ENCODE measurements at regions of chr16 and their contacts with region 1.

Region 1: DNA sequence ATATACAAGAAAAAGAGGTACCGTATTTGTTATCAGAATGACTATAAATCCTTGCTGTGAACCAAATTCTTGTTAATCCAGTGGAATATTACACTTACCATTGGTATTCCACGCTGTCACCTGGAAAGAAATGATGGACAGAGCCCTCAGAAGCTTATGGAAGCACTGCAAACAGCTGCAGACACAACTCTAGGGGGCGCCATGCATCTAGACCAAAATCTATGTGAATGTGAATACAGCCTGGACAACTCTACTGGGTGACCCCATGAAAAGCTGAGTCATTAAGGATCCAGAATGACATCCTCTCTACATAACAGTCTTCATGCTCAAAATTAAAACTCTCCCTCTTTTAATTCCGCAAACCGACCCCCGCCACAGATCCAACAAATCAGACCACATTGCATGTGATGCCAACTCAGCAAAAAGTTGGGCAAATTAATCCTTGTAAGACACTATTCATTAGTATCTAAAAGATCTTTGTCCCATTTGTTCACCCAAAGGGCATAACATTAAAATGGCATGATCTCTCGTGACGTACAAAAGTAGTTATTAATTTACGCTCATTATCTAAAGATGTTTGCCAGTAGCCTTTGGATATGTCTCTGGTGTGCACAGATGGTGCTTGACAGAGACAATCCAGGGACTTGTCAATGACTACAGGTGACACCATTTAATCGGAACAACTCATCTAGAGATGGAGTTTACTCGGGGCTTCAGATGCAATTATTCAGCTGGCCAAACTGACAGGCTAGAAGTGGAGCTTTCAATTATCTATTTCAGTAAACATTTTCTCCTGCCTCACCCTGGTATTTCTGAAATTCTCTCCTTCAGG is 552.7 kb upstream of the PSMD7 start:
- DNase-seq: peak; percentile 25
- H3K4me3 Mint-ChIP-seq: no peak overlapping the region
- H3K27ac Mint-ChIP-seq: no peak overlapping the region
- H3K4me1 Mint-ChIP-seq: no peaks in the 10 kb centered on the region
- H3K27me3 Mint-ChIP-seq: peaks cover 7% of the 10 kb centered on the region

Region 2: DNA sequence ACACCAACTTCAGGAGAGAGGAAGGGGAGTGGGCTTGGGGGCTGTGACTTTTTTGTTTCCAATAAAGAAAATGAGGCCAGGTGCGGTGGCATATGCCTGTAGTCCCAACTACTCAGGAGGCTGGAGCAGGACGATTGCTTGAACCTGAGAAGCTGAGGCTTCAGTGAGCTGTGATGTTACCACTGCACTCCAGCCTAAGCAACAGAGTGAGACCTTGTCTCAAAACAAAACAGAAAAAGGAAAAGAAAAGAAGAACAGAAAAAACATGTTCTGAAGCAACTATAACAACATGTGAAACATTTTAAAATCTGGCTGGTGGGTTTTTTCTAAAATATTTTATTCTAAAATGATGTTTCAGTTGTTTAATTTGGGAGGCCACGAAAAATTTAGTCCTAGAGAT is 142.0 kb before region 1 on chr16:
- CTCF ChIA-PET with region 1: no interaction called
- intact Hi-C with region 1: no loop called
- DNase-seq: no peak
- H3K4me3 Mint-ChIP-seq: no peak overlapping the region
- H3K27ac Mint-ChIP-seq: no peak overlapping the region
- H3K4me1 Mint-ChIP-seq: no peaks in the 10 kb centered on the region
- H3K27me3 Mint-ChIP-seq: peaks cover 5% of the 10 kb centered on the region

Region 3: DNA sequence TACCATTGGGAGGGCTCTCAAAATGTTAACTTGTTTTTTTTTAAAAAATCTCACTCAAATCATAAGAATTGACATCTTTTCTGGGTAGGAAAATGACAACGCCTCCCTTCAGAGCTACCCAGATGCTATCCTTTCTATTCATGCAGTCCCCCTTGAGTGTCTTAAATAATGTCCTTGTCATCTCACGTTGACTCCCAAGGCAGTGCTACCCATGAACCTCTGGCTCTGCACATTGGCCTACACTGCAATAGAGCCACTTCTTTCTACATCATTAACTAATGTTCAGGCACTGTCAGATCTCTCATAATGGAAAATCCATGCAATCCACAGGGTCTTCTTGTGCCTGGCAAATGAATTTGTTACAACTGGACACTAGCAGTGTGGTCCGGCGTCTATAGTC is 126.1 kb before region 1 on chr16:
- CTCF ChIA-PET with region 1: no interaction called
- intact Hi-C with region 1: no loop called
- DNase-seq: no peak
- H3K4me3 Mint-ChIP-seq: no peak overlapping the region
- H3K27ac Mint-ChIP-seq: no peak overlapping the region
- H3K4me1 Mint-ChIP-seq: no peaks in the 10 kb centered on the region
- H3K27me3 Mint-ChIP-seq: peaks cover 4% of the 10 kb centered on the region

Region 4: DNA sequence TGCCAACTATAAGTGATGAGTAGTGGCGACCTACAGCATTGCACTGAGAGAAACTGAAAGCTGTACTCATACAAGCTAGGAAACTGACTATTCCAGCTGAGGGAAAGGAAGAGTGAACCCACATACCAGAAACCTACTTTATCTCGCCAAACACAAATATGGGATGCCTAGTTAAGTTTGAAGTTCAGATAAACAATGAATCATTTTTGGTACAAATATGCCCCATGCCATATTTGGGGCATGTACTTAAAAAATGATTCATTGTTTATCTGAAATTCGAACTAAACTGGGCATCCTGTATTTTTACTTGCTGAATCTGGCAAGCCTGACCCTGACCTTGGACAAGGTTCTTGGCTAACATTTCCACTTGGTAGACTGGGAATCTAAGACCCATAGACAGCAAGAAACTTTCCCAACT is 24.9 kb after region 1 on chr16:
- CTCF ChIA-PET with region 1: no interaction called
- intact Hi-C with region 1: no loop called
- DNase-seq: no peak
- H3K4me3 Mint-ChIP-seq: no peak overlapping the region
- H3K27ac Mint-ChIP-seq: no peak overlapping the region
- H3K4me1 Mint-ChIP-seq: no peaks in the 10 kb centered on the region
- H3K27me3 Mint-ChIP-seq: no peaks in the 10 kb centered on the region

Region 5: GRCh38 chr16:73823205-73823849 is 79.4 kb after region 1 on chr16:
- CTCF ChIA-PET with region 1: no interaction called
- intact Hi-C with region 1: no loop called
- DNase-seq: no peak
- H3K4me3 Mint-ChIP-seq: no peak overlapping the region
- H3K27ac Mint-ChIP-seq: no peak overlapping the region
- H3K4me1 Mint-ChIP-seq: no peaks in the 10 kb centered on the region
- H3K27me3 Mint-ChIP-seq: no peaks in the 10 kb centered on the region

Region 6: GRCh38 chr16:73878611-73879010 is 134.7 kb after region 1 on chr16:
- CTCF ChIA-PET with region 1: no interaction called
- intact Hi-C with region 1: loop called (anchors 10 kb)
- DNase-seq: no peak
- H3K4me3 Mint-ChIP-seq: no peak overlapping the region
- H3K27ac Mint-ChIP-seq: no peak overlapping the region
- H3K4me1 Mint-ChIP-seq: no peaks in the 10 kb centered on the region
- H3K27me3 Mint-ChIP-seq: peaks cover 6% of the 10 kb centered on the region